ENCODE measurements at regions of chr11 and their contacts with region 1.

Region 1: GRCh38 chr11:44065841-44066731 is at the start of gene ACCS:
- DNase-seq: peak; percentile 75 to 96 (median 86)
- ATAC-seq: peak; percentile 95
- H3K4me3 ChIP-seq: peak within 1 kb of the TSS; percentile 90
- H3K4me3 Mint-ChIP-seq: peak within 1 kb of the TSS; percentile 89
- H3K27ac ChIP-seq: peak within 1 kb of the TSS; percentile 59 to 65
- H3K27ac Mint-ChIP-seq: peak within 1 kb of the TSS; percentile 88
- H3K4me1 ChIP-seq: peaks cover 20% of the 10 kb centered on the region
- H3K4me1 Mint-ChIP-seq: peaks cover 30% of the 10 kb centered on the region
- H3K27me3 ChIP-seq: no peaks in the 10 kb centered on the region
- H3K27me3 Mint-ChIP-seq: no peaks in the 10 kb centered on the region
- CTCF ChIP-seq: peak; percentile 90
- total RNA-seq, gene ACCS: 17.7 to 18.7 TPM

Region 2: GRCh38 chr11:43680521-43681400 is 385.3 kb before region 1 on chr11 and contains the start of gene HSD17B12:
- CTCF ChIA-PET with region 1: no interaction called
- POLR2A ChIA-PET with region 1: no interaction called
- intact Hi-C with region 1: loop called in 1 of 2 experiments (anchors 5 kb)
- DNase-seq: peak; percentile 95 to 99 (median 98)
- ATAC-seq: peak; percentile 92
- H3K4me3 ChIP-seq: peak within 1 kb of the TSS; percentile 91
- H3K4me3 Mint-ChIP-seq: peak within 1 kb of the TSS; percentile 96
- H3K27ac ChIP-seq: peak within 1 kb of the TSS; percentile 67 to 93
- H3K27ac Mint-ChIP-seq: peak within 1 kb of the TSS; percentile 96
- H3K4me1 ChIP-seq: peaks cover 18% of the 10 kb centered on the region
- H3K4me1 Mint-ChIP-seq: peaks cover 48% of the 10 kb centered on the region
- H3K27me3 ChIP-seq: no peaks in the 10 kb centered on the region
- H3K27me3 Mint-ChIP-seq: no peaks in the 10 kb centered on the region
- CTCF ChIP-seq: no peak
- total RNA-seq, gene HSD17B12: 16.1 to 16.3 TPM

Region 3: GRCh38 chr11:43979571-43980190 is 86.4 kb before region 1 on chr11:
- CTCF ChIA-PET with region 1: no interaction called
- POLR2A ChIA-PET with region 1: no interaction called
- intact Hi-C with region 1: no loop called
- DNase-seq: no peak
- ATAC-seq: no peak
- H3K4me3 ChIP-seq: no peak overlapping the region
- H3K4me3 Mint-ChIP-seq: no peak overlapping the region
- H3K27ac ChIP-seq: no peak overlapping the region
- H3K27ac Mint-ChIP-seq: no peak overlapping the region
- H3K4me1 ChIP-seq: no peaks in the 10 kb centered on the region
- H3K4me1 Mint-ChIP-seq: no peaks in the 10 kb centered on the region
- H3K27me3 ChIP-seq: peaks cover 0 to 9% of the 10 kb centered on the region in 2 experiments
- H3K27me3 Mint-ChIP-seq: peaks cover 50% of the 10 kb centered on the region
- CTCF ChIP-seq: no peak